T-cell (primary cell): ENCODE measurements at regions of chr4 and their contacts with region 1.

Region 1: DNA sequence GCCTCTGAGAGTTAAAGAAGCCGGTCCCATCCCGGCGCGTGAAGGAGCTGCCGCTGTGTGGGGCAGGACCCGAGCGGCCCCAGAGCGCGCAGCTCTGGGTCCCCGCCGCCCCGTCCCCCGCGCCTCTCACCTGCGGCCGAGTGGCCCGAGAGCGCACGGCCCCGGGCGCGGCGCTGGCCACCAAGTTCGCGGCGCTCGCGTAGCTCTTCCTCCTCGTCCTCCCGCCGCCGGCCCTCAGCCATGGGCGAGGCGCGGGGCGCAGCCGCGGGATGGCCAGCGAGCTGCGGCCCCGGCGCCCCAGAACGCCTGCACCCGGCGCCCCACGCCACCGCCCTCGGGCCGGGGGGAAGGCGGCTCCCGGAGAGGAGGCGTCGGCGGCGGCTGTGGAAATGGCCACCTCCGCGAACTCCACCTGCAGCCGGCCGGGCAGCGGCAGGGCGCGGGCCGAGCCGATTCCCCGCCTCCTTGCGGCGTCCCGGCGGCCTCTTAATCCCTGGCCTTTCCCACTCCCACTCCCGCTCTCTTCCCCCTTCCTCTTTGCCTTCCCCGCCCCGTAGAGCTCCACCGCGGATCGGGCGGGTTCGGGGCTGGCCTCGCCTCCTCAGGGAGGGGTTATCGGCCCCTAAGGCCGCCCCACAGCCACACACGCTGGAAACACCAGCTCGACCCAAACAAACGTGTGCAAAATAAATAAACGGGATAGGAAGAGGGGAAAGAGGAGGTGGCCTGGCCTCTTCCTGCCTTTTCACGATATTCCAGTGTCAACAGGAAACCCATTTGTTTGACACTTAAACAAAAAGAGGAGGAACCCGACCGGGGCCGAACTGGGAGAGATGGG is at the start of gene SH3D19:
- DNase-seq: peak in 1 of 35 experiments; percentile 0
- ATAC-seq: no peak
- H3K4me3 ChIP-seq: peak within 1 kb of the TSS in 1 of 2 donors; percentile 27
- H3K4me3 Mint-ChIP-seq: peak within 1 kb of the TSS; percentile 53 to 72 (median 61)
- H3K27ac ChIP-seq: no peak within 1 kb of the TSS
- H3K27ac Mint-ChIP-seq: no peak within 1 kb of the TSS
- H3K4me1 ChIP-seq: peaks cover 0 to 7% of the 10 kb centered on the region in 2 experiments
- H3K4me1 Mint-ChIP-seq: peaks cover 6 to 16% (median 12%) of the 10 kb centered on the region in 3 donors
- H3K27me3 ChIP-seq: peaks cover 3 to 19% of the 10 kb centered on the region in 2 experiments
- H3K27me3 Mint-ChIP-seq: peaks cover 50 to 62% of the 10 kb centered on the region in 2 donors
- total RNA-seq, gene SH3D19: 0.38 to 0.66 (median 0.51) TPM in 4 of 5 donors, not detected in the other

Region 2: DNA sequence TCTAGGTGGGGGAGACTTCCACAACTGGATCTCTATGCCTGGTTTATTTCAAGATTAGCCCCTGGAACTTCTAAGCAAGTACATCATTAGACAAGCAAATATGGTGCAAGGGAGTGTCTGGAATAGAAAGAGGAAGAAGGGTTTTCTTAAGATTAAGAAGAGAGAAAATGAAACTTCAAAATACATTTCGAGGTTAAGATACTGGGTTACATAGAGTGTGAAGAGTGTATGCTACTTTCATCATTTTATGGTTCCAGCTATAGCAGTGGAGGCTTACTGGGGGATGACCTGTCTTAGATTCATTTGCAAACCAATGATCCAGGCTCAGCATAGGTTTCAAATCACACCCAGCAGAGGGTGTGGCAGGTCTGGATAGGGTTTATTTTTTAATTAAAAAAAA is 579.9 kb after region 1 on chr4:
- CTCF ChIA-PET with region 1: interaction called in 1 of 2 experiments, 13 read pairs
- POLR2A ChIA-PET with region 1: no interaction called
- DNase-seq: no peak
- ATAC-seq: no peak
- H3K4me3 ChIP-seq: no peak overlapping the region
- H3K4me3 Mint-ChIP-seq: no peak overlapping the region
- H3K27ac ChIP-seq: no peak overlapping the region
- H3K27ac Mint-ChIP-seq: no peak overlapping the region
- H3K4me1 ChIP-seq: no peaks in the 10 kb centered on the region
- H3K4me1 Mint-ChIP-seq: peaks cover 2 to 7% (median 4%) of the 10 kb centered on the region in 3 donors
- H3K27me3 ChIP-seq: no peaks in the 10 kb centered on the region
- H3K27me3 Mint-ChIP-seq: no peaks in the 10 kb centered on the region

Region 3: GRCh38 chr4:152661649-152662048 is 1336.3 kb after region 1 on chr4:
- CTCF ChIA-PET with region 1: no interaction called
- POLR2A ChIA-PET with region 1: interaction called in 1 of 2 experiments, 13 read pairs
- DNase-seq: no peak
- ATAC-seq: no peak
- H3K4me3 ChIP-seq: no peak overlapping the region
- H3K4me3 Mint-ChIP-seq: no peak overlapping the region
- H3K27ac ChIP-seq: no peak overlapping the region
- H3K27ac Mint-ChIP-seq: peak overlapping the region; percentile 48 to 68
- H3K4me1 ChIP-seq: peaks cover 10 to 21% of the 10 kb centered on the region in 2 experiments
- H3K4me1 Mint-ChIP-seq: peaks cover 24 to 38% (median 36%) of the 10 kb centered on the region in 3 donors
- H3K27me3 ChIP-seq: no peaks in the 10 kb centered on the region
- H3K27me3 Mint-ChIP-seq: no peaks in the 10 kb centered on the region